ENCODE measurements at regions of chr20 and their contacts with region 1.

Region 1: DNA sequence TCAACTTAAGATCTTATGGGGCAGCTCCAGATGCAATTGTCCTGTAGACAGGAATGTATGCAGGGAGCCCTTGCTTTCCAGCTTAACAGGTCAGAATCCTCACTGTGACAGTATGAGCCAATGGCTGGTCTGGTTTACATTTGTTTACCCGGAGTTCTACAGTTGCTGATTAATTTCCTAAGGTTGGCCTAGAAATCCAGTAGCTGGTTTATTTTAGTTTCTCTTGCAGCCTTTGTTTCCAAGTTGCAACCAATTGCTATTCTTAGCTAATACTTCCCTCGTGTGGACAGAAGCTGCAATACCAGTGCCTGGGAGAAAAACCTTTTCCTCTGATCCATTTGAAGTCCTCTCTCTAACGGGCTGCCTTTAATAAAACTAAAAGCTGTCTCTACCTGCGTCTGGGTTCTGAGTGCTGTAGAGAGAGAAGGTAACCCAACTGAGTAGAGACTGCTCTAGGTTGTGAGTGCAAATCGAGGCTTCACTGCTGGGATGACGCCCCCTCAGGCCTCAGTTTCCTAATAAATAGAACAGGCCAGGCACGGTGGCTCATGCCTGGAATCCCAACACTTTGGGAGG is 45.9 kb downstream of the ZNF217 start:
- ATAC-seq: peak; percentile 70 to 93 (median 82)
- H3K4me3 ChIP-seq: no peak overlapping the region
- H3K27ac ChIP-seq: no peak overlapping the region
- H3K4me1 ChIP-seq: peaks cover 6% of the 10 kb centered on the region in 2 donors

Region 2: GRCh38 chr20:52242237-52243230 is 1305.2 kb before region 1 on chr20:
- in situ Hi-C with region 1: loop called in 2 of 9 experiments (anchors 10 to 25 kb)
- ATAC-seq: no peak
- H3K4me3 ChIP-seq: no peak overlapping the region
- H3K27ac ChIP-seq: no peak overlapping the region
- H3K4me1 ChIP-seq: peaks cover 0 to 3% of the 10 kb centered on the region in 2 donors

Region 3: DNA sequence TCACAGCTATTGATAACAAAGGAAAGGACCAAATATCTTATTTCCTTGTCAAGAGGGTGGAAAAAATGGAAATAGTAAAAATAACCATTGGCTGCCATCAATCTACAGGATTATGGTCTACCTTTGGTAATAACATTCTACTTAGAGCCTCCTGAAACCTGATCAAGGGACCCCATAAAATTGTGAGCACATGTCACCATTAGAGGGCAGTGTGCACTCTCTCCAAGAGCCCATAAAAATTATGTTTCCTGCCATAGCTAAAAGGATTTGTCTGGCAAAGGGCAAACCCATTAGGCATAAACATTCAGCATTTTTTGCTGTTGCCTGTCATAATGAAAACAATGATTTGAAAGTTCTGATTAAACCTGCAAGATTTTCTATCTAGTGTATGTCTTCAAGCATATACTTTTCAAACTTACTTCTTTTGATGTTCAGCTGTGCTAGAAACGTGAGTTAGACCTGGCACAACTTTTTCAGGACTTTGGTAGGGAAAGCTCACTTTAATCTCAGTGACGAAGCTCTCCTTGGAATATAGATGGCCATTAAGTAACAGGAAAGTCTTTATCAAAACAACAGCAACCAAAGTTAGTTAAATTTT is 1235.5 kb before region 1 on chr20:
- in situ Hi-C with region 1: loop called in 1 of 9 experiments (anchors 25 kb)
- ATAC-seq: peak in 7 of 8 experiments; percentile 31 to 81 (median 51)
- H3K4me3 ChIP-seq: no peak overlapping the region
- H3K27ac ChIP-seq: no peak overlapping the region
- H3K4me1 ChIP-seq: peaks cover 27 to 56% of the 10 kb centered on the region in 2 donors

Region 4: GRCh38 chr20:52972190-52972937 is 575.4 kb before region 1 on chr20 and contains the start of gene TSHZ2:
- in situ Hi-C with region 1: loop called in 2 of 9 experiments (anchors 25 kb)
- ATAC-seq: peak; percentile 76 to 87 (median 82)
- H3K4me3 ChIP-seq: peak within 1 kb of the TSS; percentile 40 to 81 (median 49)
- H3K27ac ChIP-seq: peak within 1 kb of the TSS; percentile 34 to 84
- H3K4me1 ChIP-seq: peaks cover 7 to 11% of the 10 kb centered on the region in 2 donors
- total RNA-seq, gene TSHZ2: 11.4 to 125 (median 47.7) TPM

Region 5: GRCh38 chr20:53312957-53313356 is 234.8 kb before region 1 on chr20:
- in situ Hi-C with region 1: no loop called
- ATAC-seq: peak in 1 of 8 experiments; percentile 81
- H3K4me3 ChIP-seq: no peak overlapping the region
- H3K27ac ChIP-seq: no peak overlapping the region
- H3K4me1 ChIP-seq: peaks cover 32 to 34% of the 10 kb centered on the region in 2 donors

Region 6: DNA sequence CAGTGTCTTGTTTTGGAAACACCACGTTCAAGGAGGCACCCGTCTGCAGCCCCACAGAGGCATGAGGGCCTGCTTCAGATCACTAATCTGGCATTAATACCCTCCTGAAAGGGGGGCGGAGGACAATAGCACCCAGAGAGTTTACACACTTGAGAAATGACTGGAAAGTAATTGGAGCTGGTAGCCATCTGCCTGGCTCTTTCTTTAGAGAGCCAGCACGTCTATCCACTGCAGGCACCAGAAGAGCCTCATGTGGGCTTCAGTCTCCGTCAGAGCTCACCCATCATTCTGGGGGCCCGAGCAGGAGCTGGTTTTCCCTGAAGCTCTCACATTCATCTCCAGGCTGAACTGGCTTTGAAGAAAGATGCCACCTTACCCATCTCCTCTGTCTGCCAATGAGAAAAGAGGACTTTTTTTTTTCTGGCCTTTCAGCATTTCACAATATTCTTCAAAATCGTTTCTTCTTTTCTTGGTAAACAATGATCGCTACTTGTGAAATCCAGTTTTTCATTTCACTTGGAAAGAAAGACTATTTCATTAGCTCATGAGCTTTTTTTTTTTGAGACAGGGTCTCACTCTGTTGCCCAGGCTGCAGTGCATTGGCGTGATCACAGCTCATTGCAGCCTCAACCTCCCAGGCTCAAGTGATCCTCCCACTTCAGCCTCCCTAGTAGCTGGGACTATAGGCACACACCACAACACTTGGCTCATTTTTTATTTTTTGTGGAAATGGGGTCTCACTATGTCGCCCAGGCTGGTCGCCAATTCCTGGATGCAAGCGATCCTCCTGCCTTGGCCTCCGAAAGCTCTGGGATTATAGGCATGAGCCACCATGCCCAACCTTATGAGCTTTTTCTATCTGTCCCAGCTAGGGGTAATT is 170.6 kb after region 1 on chr20:
- in situ Hi-C with region 1: no loop called
- ATAC-seq: no peak
- H3K4me3 ChIP-seq: no peak overlapping the region
- H3K27ac ChIP-seq: no peak overlapping the region
- H3K4me1 ChIP-seq: no peaks in the 10 kb centered on the region

Measured in motor neuron (in vitro differentiated cells).